ENCODE measurements at regions of chr1 and their contacts with region 1.

Region 1: GRCh38 chr1:59296358-59297256 is at the start of gene FGGY:
- DNase-seq: peak; percentile 85
- ATAC-seq: peak; percentile 88
- H3K4me3 Mint-ChIP-seq: peak within 1 kb of the TSS; percentile 92
- H3K27ac Mint-ChIP-seq: peak within 1 kb of the TSS; percentile 95
- H3K4me1 Mint-ChIP-seq: peaks cover 48% of the 10 kb centered on the region
- H3K27me3 Mint-ChIP-seq: no peaks in the 10 kb centered on the region
- CTCF ChIP-seq: no peak
- total RNA-seq, gene FGGY: 22.1 and 24.0 TPM in 2 replicates

Region 2: DNA sequence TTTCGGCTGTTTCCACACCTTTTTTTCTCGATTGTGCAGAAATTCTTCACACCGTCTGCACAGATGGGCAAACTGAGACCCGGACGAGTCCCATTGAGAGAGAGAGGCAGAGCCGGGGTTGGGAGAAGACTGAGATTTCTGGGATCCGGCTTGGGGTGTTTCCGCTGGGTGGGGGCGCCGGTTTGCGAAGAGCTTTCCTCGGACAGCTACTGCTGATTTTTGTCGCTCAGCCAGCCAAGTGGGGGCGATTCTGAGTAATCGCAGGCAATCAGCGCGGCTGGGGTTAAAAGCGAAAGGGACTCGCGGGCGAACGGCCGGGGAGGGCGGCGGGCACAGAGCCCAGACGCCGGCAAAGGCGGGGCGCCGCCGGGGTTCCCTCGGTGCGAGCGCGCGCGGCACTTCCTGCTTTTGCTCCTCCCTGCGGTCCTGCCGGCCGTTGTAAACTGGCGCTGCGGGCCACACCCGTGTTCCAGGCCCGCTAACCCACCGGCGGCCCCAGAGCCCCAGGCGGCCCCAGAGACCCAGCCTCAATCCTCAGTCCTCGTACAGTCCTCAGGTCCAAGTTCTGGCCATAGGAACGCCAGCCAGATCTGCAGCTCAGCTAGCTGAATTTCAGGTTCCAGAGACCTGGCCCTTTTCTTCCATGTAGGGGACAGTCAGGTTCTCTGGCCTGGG is 480.4 kb before region 1 on chr1:
- CTCF ChIA-PET with region 1: no interaction called
- POLR2A ChIA-PET with region 1: interaction called, 10 read pairs
- intact Hi-C with region 1: loop called (anchors 10 kb)
- DNase-seq: peak; percentile 85
- ATAC-seq: peak; percentile 91
- H3K4me3 Mint-ChIP-seq: peak overlapping the region; percentile 93
- H3K27ac Mint-ChIP-seq: peak overlapping the region; percentile 92
- H3K4me1 Mint-ChIP-seq: peaks cover 46% of the 10 kb centered on the region
- H3K27me3 Mint-ChIP-seq: no peaks in the 10 kb centered on the region
- CTCF ChIP-seq: no peak

Region 3: DNA sequence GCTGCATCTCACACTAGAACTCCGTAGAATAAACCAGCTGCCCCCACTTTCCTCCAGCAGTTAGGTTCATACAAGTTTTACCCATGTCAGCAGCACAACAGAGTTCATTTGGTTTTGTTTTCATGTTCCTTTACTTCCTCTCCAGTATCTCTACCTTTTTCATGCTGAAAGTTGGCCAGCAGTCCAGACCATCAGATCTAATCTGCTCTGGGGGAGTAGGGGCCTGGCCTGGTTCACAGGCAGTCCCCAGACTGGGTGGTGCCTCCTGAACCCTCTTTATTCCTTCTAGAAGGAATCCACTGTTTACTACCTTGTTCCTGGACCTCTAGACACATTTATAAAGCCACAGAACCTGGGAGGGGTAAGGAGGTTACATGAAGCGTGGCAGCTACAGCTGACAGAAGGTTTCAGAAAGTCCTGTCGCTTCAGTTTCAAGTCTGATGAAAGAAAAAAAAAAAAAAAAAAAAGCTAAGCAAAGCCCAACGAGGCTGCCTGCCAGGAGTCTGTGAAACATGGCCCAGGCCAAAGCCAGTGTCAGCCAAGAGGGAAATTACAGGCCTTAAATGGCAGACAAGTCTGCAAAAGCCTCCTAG is 328.2 kb before region 1 on chr1:
- CTCF ChIA-PET with region 1: no interaction called
- POLR2A ChIA-PET with region 1: interaction called, 8 read pairs
- intact Hi-C with region 1: loop called (anchors 1 kb)
- DNase-seq: peak; percentile 46
- ATAC-seq: peak; percentile 95
- H3K4me3 Mint-ChIP-seq: peak overlapping the region; percentile 77
- H3K27ac Mint-ChIP-seq: peak overlapping the region; percentile 99
- H3K4me1 Mint-ChIP-seq: peaks cover 72% of the 10 kb centered on the region
- H3K27me3 Mint-ChIP-seq: no peaks in the 10 kb centered on the region
- CTCF ChIP-seq: no peak

Region 4: DNA sequence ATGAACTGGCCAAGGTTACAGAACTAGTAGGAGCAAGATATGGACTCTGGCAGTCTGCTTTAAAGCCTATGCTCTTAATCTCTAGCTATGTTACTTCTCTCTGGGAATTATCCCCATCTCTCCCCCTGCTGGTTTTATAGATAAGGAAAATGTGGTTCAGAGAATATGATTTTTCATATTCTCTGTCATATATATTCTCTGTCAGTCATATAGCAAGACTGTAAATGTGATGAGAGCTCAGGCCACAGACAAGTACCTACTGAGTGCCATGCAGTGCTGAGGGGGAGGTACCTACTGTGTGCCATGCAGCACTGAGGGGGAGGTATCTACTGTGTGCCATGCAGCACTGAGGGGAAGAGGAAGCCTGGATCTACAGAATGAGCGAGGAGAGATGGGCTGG is 220.0 kb before region 1 on chr1:
- CTCF ChIA-PET with region 1: interaction called, 3 read pairs
- POLR2A ChIA-PET with region 1: interaction called, 3 read pairs
- intact Hi-C with region 1: loop called (anchors 10 kb)
- DNase-seq: no peak
- ATAC-seq: no peak
- H3K4me3 Mint-ChIP-seq: no peak overlapping the region
- H3K27ac Mint-ChIP-seq: no peak overlapping the region
- H3K4me1 Mint-ChIP-seq: peaks cover 31% of the 10 kb centered on the region
- H3K27me3 Mint-ChIP-seq: no peaks in the 10 kb centered on the region
- CTCF ChIP-seq: no peak

Region 5: GRCh38 chr1:59272507-59272906 is 24.1 kb before region 1 on chr1:
- CTCF ChIA-PET with region 1: interaction called, 11 read pairs
- POLR2A ChIA-PET with region 1: interaction called, 39 read pairs
- intact Hi-C with region 1: loop called (anchors 1 kb)
- DNase-seq: no peak
- ATAC-seq: peak; percentile 94
- H3K4me3 Mint-ChIP-seq: peak overlapping the region; percentile 57
- H3K27ac Mint-ChIP-seq: peak overlapping the region; percentile 84
- H3K4me1 Mint-ChIP-seq: peaks cover 57% of the 10 kb centered on the region
- H3K27me3 Mint-ChIP-seq: no peaks in the 10 kb centered on the region
- CTCF ChIP-seq: no peak

Measured in activated B cell treated with CpG ODN at 0.5 μM for 24 hours (primary cell).